ENCODE measurements at regions of chrX and their contacts with region 1.

Region 1: DNA sequence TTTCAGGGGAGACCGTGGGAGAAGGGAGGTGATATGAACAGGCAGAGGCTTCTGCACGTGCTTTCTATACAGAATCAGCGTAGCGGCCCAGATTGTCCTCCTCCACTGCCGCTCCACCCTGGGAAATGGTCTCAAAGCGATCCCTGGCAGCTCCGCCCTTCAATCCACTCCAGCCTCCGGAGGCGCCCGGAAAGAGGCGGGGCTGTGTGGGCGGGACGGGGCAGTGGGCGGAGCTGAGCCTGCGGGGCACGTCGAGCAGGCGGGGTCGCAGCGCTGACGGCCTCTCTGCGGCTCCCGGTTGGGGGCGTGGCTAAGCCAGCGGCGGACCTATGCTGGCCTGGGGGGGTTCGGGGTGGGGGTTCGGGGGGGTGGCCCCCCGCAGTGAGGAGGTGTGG is 210 bp upstream of the SMIM10L2A start:
- DNase-seq: peak; percentile 75 to 89 (median 83)
- ATAC-seq: peak; percentile 96
- H3K4me3 ChIP-seq: peak overlapping the region; percentile 37
- H3K4me3 Mint-ChIP-seq: peak overlapping the region; percentile 53 to 84 (median 72)
- H3K27ac ChIP-seq: no peak overlapping the region
- H3K27ac Mint-ChIP-seq: peak overlapping the region in 4 of 9 donors; percentile 12 to 68 (median 26)
- H3K4me1 ChIP-seq: no peaks in the 10 kb centered on the region
- H3K4me1 Mint-ChIP-seq: peaks cover 0 to 13% (median 6%) of the 10 kb centered on the region in 7 donors
- H3K27me3 ChIP-seq: no peaks in the 10 kb centered on the region
- H3K27me3 Mint-ChIP-seq: peaks cover 0 to 22% (median 0%) of the 10 kb centered on the region in 5 donors

Region 2: DNA sequence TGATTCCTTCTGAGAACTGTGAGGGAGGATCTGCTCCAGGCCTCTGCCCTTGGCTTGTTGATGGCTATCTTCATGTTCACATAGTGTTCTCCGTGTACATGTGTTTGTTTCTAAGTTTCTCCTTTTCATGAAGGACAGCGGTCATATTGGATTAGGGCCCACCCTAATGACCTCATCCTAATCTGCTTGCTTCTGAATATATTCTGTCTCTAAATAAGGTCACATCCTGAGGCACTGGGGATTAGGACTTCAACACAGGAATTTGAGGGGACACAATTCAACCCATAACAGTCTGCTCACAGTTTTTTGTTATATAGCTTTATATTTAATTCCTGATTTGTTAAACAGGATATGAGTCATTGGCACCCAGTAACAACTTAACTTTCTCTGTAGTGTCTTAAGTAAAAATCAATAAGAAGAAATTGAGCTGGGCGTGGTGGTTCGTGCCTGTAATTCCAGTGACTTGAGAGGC is 585.0 kb before region 1 on chrX:
- CTCF ChIA-PET with region 1: no interaction called
- POLR2A ChIA-PET with region 1: no interaction called
- intact Hi-C with region 1: no loop called
- DNase-seq: no peak
- ATAC-seq: no peak
- H3K4me3 ChIP-seq: no peak overlapping the region
- H3K4me3 Mint-ChIP-seq: no peak overlapping the region
- H3K27ac ChIP-seq: no peak overlapping the region
- H3K27ac Mint-ChIP-seq: no peak overlapping the region
- H3K4me1 ChIP-seq: no peaks in the 10 kb centered on the region
- H3K4me1 Mint-ChIP-seq: peaks cover 0 to 4% (median 0%) of the 10 kb centered on the region in 7 donors
- H3K27me3 ChIP-seq: no peaks in the 10 kb centered on the region
- H3K27me3 Mint-ChIP-seq: no peaks in the 10 kb centered on the region

Region 3: DNA sequence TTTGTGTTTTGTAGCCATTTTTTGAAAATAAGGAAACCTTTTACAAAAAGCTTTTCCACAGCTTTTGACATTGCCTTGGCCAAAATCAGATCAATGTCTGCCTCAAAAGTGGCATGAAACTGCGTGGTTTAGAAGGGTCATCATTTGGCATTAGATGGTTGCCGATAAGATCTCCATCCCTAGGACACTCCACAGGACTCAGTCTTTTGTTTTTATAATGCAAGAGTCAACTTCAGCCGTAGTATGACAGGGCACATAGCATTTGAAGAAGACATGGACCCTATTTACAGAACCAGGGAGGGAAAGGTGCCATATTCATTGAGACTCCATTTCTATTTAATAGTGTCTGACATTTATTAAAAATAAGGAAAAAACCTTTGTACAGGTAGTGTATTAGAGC is 370.9 kb before region 1 on chrX:
- CTCF ChIA-PET with region 1: no interaction called
- POLR2A ChIA-PET with region 1: no interaction called
- intact Hi-C with region 1: loop called in 1 of 2 experiments (anchors 5 kb)
- DNase-seq: no peak
- ATAC-seq: no peak
- H3K4me3 ChIP-seq: no peak overlapping the region
- H3K4me3 Mint-ChIP-seq: peak overlapping the region; percentile 69 to 95 (median 90)
- H3K27ac ChIP-seq: no peak overlapping the region
- H3K27ac Mint-ChIP-seq: peak overlapping the region in 8 of 9 donors; percentile 77 to 95 (median 86)
- H3K4me1 ChIP-seq: no peaks in the 10 kb centered on the region
- H3K4me1 Mint-ChIP-seq: peaks cover 12 to 26% (median 24%) of the 10 kb centered on the region in 7 donors
- H3K27me3 ChIP-seq: no peaks in the 10 kb centered on the region
- H3K27me3 Mint-ChIP-seq: no peaks in the 10 kb centered on the region

Region 4: DNA sequence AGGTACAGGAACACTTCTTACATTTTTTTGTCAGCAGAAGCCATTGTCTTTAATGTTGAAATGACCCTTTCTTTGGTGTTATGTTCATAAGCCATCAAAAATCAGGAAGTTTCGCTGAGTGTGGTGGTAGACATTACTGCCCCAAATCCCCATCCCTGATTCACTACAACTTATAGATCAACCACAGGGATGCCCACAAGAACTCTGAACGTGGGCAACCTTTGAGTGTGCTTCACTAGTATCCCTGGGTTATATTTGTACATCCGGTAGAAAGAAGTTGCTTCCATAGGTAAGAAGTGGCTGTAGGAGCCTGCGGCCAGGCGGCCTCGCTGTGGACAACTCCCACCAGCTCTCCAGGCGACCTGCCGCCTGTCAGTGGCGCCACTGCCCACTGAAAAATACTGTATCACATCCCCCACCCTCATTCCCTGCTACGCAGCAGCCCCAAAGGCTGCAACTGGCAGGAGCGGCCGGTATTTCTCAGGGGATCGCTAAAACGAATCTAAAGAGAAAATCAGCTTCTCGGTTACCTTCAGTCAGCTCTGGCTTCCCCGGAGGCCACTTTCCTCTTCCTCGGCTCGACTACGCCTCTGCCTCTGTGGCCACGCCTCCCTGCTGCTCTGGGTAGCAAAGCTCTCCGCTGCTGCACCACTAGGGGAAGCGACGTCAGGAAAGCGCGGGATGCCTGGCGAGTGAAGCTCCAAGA is 126.1 kb before region 1 on chrX:
- CTCF ChIA-PET with region 1: no interaction called
- POLR2A ChIA-PET with region 1: no interaction called
- intact Hi-C with region 1: loop called in 1 of 2 experiments (anchors 2 kb)
- DNase-seq: peak; percentile 26 to 69 (median 58)
- ATAC-seq: peak; percentile 98
- H3K4me3 ChIP-seq: peak overlapping the region; percentile 63
- H3K4me3 Mint-ChIP-seq: peak overlapping the region; percentile 85 to 95 (median 92)
- H3K27ac ChIP-seq: peak overlapping the region; percentile 67
- H3K27ac Mint-ChIP-seq: peak overlapping the region; percentile 76 to 94 (median 90)
- H3K4me1 ChIP-seq: peaks cover 5 to 9% of the 10 kb centered on the region in 2 donors
- H3K4me1 Mint-ChIP-seq: peaks cover 0 to 32% (median 23%) of the 10 kb centered on the region in 7 donors
- H3K27me3 ChIP-seq: no peaks in the 10 kb centered on the region
- H3K27me3 Mint-ChIP-seq: no peaks in the 10 kb centered on the region

Region 5: DNA sequence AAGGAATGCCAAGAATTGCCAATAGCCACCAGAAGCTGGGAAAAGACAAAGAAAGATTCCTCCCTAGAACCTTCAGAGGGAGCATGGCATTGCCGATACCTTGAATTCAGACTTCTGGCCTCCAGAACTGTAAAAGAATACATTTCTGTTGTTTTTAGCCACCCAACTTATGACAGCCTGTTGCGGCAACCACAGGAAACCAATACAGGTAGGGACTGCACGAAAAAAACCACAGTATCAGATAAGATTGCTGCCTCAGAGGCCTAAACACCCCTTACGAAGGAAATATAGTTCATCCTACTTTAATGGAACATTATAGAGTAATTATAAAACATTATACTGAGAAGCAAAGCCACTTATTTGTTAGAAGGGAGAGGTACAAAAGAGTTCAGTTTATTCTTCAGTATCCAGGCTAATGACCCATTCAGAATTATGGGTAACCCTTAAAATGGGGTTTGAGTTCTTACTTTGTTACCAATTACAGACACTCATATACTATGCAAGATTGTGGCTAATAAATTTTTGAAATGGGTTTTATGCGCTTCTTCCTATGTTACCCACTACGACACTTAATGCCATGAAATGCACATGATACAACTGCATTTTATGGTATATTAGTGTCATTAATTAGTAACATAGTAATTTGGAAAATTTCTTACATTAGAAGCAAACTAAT is 37.2 kb before region 1 on chrX:
- CTCF ChIA-PET with region 1: no interaction called
- POLR2A ChIA-PET with region 1: no interaction called
- intact Hi-C with region 1: loop called (anchors 1 to 2 kb)
- DNase-seq: peak in 8 of 9 donors; percentile 35 to 70 (median 56)
- ATAC-seq: peak; percentile 97
- H3K4me3 ChIP-seq: peak overlapping the region; percentile 35
- H3K4me3 Mint-ChIP-seq: peak overlapping the region; percentile 46 to 78 (median 64)
- H3K27ac ChIP-seq: no peak overlapping the region
- H3K27ac Mint-ChIP-seq: peak overlapping the region; percentile 17 to 92 (median 72)
- H3K4me1 ChIP-seq: peaks cover 30 to 40% of the 10 kb centered on the region in 2 donors
- H3K4me1 Mint-ChIP-seq: peaks cover 17 to 50% (median 44%) of the 10 kb centered on the region in 7 donors
- H3K27me3 ChIP-seq: no peaks in the 10 kb centered on the region
- H3K27me3 Mint-ChIP-seq: no peaks in the 10 kb centered on the region

Region 6: GRCh38 chrX:135605906-135606305 is 184.4 kb after region 1 on chrX:
- CTCF ChIA-PET with region 1: no interaction called
- POLR2A ChIA-PET with region 1: no interaction called
- intact Hi-C with region 1: no loop called
- DNase-seq: no peak
- ATAC-seq: no peak
- H3K4me3 ChIP-seq: no peak overlapping the region
- H3K4me3 Mint-ChIP-seq: no peak overlapping the region
- H3K27ac ChIP-seq: no peak overlapping the region
- H3K27ac Mint-ChIP-seq: no peak overlapping the region
- H3K4me1 ChIP-seq: no peaks in the 10 kb centered on the region
- H3K4me1 Mint-ChIP-seq: peaks cover 0 to 2% (median 0%) of the 10 kb centered on the region in 7 donors
- H3K27me3 ChIP-seq: no peaks in the 10 kb centered on the region
- H3K27me3 Mint-ChIP-seq: peaks cover 2 to 25% (median 7%) of the 10 kb centered on the region in 5 donors

Measured in naive thymus-derived CD4-positive, alpha-beta T cell (primary cell).